Mammary epithelial cell (primary cell): ENCODE measurements at regions of chr18 and their contacts with region 1.

Region 1: GRCh38 chr18:12606592-12607315 is 51.2 kb downstream of the SPIRE1 start:
- DNase-seq: peak; percentile 70
- H3K4me3 ChIP-seq: no peak overlapping the region
- H3K27ac ChIP-seq: peak overlapping the region; percentile 96
- H3K4me1 ChIP-seq: peaks cover 31% of the 10 kb centered on the region
- H3K27me3 ChIP-seq: no peaks in the 10 kb centered on the region
- CTCF ChIP-seq: no peak

Region 2: GRCh38 chr18:12497291-12497690 is 109.5 kb before region 1 on chr18:
- CTCF ChIA-PET with region 1: no interaction called
- dilution Hi-C with region 1: loop called (anchors 5 kb)
- in situ Hi-C with region 1: no loop called
- intact Hi-C with region 1: no loop called
- DNase-seq: peak; percentile 7
- H3K4me3 ChIP-seq: no peak overlapping the region
- H3K27ac ChIP-seq: no peak overlapping the region
- H3K4me1 ChIP-seq: no peaks in the 10 kb centered on the region
- H3K27me3 ChIP-seq: no peaks in the 10 kb centered on the region
- CTCF ChIP-seq: no peak

Region 3: GRCh38 chr18:12543697-12544096 is 63.1 kb before region 1 on chr18:
- CTCF ChIA-PET with region 1: no interaction called
- dilution Hi-C with region 1: loop called (anchors 10 kb)
- in situ Hi-C with region 1: no loop called
- intact Hi-C with region 1: loop called (anchors 5 kb)
- DNase-seq: peak; percentile 62
- H3K4me3 ChIP-seq: no peak overlapping the region
- H3K27ac ChIP-seq: no peak overlapping the region
- H3K4me1 ChIP-seq: peaks cover 9% of the 10 kb centered on the region
- H3K27me3 ChIP-seq: no peaks in the 10 kb centered on the region
- CTCF ChIP-seq: no peak

Region 4: DNA sequence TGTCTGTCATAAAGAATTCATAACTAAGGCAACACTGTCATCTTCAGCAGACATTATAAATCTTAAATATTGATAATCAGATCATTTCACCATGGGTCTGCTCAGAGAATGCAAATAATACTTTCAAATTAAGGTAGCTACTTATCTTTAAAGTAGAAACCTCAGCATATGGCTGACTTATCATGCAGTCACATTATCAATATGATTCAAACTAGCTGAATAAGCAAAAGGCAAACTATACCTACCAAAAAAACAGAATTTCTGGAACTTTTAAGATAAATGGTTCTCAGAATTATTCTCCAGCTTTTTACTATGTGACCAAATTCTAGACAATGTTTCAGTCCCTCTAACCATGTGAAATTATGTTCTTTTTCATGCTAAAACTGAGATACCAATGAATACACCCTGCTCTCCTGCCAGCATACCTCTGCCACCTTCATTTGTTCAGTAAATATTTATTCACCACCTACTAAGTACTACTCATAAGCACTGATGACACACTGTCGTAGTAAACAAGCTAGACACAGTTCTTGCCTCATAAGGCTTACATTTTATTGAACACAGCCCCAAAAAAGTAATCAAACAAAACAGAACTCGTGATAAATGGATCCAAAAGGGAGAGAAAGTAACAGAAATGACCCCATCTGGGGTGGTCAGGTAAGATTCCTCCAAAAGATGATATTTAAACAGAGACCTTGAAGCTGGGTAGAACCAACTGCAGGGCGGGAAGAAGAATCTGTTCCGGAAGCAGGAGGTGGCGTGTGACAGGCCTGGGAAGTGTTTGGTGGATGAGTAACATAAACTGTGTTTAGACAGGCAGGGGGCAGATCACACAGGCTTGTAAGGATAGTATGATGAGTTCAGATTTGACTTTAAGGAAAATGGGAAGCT is 33.5 kb after region 1 on chr18:
- CTCF ChIA-PET with region 1: no interaction called
- dilution Hi-C with region 1: no loop called
- in situ Hi-C with region 1: loop called in 1 of 2 experiments (anchors 5 kb)
- intact Hi-C with region 1: loop called (anchors 2 kb)
- DNase-seq: peak; percentile 79
- H3K4me3 ChIP-seq: no peak overlapping the region
- H3K27ac ChIP-seq: peak overlapping the region; percentile 74
- H3K4me1 ChIP-seq: peaks cover 38% of the 10 kb centered on the region
- H3K27me3 ChIP-seq: no peaks in the 10 kb centered on the region
- CTCF ChIP-seq: peak in 1 of 2 donors; percentile 17

Region 5: DNA sequence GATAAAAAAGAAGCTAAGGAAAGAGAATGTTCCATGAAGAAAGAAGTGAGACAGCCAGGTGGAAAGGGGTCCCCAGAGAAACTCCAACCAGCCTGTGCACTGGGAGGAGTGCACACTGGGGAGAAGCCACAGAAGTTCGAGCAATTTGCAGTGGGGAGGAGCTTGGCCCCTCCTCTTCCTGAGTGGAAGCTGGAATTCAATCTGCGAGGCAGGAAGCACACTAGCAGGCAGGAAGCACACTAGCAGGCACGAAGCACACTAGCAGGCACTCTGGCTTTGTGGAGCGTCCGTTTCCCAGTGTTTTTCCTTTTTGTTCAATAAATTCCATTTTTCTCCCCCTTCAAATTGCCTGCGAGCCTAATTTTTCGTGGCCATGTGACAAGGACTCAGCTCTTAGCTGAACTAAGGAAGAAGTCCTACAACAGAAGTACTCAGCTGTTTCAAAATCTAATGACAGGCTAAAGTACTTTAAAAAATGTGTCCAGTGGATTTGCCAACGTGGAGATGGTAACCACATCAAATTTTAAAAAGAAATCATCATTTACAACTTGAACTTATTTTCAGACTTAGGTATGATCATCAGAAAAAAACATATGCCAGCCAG is 72.5 kb after region 1 on chr18:
- CTCF ChIA-PET with region 1: no interaction called
- dilution Hi-C with region 1: no loop called
- in situ Hi-C with region 1: no loop called
- intact Hi-C with region 1: no loop called
- DNase-seq: no peak
- H3K4me3 ChIP-seq: no peak overlapping the region
- H3K27ac ChIP-seq: no peak overlapping the region
- H3K4me1 ChIP-seq: no peaks in the 10 kb centered on the region
- H3K27me3 ChIP-seq: no peaks in the 10 kb centered on the region
- CTCF ChIP-seq: no peak